Right ventricle myocardium inferior (tissue), 1 donor: ENCODE measurements at regions of chr18 and their contacts with region 1.

Region 1: GRCh38 chr18:56650944-56651770 is at the start of gene WDR7:
- DNase-seq: peak; percentile 98
- ATAC-seq: peak; percentile 99
- total RNA-seq, gene WDR7: 21.8 TPM

Region 2: GRCh38 chr18:56638271-56639093 is 12.7 kb before region 1 on chr18 and contains the start of gene TXNL1:
- intact Hi-C with region 1: loop called (anchors 1 kb)
- DNase-seq: peak; percentile 99
- ATAC-seq: peak; percentile 99
- total RNA-seq, gene TXNL1: 106 TPM